ENCODE measurements at regions of chr3 and their contacts with region 1.

Region 1: DNA sequence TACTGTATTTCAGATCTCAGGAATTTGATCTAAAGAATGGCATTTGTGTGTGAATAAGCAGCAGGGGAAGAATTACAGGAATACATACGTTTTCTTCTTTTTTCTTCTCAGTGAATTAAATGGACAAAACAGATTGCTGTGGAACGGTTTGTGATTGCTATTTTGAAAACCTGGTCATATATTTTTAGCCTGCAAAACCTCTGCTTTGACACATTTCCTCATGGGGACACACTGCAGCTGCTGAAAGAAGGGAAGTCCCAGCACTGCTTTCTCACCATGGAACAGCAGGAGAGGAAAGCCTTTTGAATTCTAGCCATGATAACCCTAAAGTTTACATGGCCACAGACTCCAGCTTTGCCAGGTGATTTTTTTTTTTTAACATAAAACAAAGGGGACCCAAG is 315.0 kb downstream of the OXSM start:
- DNase-seq: no peak
- H3K4me3 ChIP-seq: no peak overlapping the region
- H3K27ac ChIP-seq: no peak overlapping the region
- H3K4me1 ChIP-seq: peaks cover 0 to 8% of the 10 kb centered on the region in 2 donors
- H3K27me3 ChIP-seq: no peaks in the 10 kb centered on the region
- CTCF ChIP-seq: no peak

Region 2: GRCh38 chr3:25789596-25790556 is 315.0 kb before region 1 on chr3 and contains the start of gene OXSM:
- intact Hi-C with region 1: loop called (anchors 10 kb)
- DNase-seq: peak; percentile 73 to 95
- H3K4me3 ChIP-seq: peak within 1 kb of the TSS; percentile 68 to 69
- H3K27ac ChIP-seq: peak within 1 kb of the TSS; percentile 83 to 85
- H3K4me1 ChIP-seq: peaks cover 0 to 8% of the 10 kb centered on the region in 2 donors
- H3K27me3 ChIP-seq: no peaks in the 10 kb centered on the region
- CTCF ChIP-seq: no peak
- total RNA-seq, gene OXSM: not detected